ENCODE measurements at regions of chr17 and their contacts with region 1.

Region 1: DNA sequence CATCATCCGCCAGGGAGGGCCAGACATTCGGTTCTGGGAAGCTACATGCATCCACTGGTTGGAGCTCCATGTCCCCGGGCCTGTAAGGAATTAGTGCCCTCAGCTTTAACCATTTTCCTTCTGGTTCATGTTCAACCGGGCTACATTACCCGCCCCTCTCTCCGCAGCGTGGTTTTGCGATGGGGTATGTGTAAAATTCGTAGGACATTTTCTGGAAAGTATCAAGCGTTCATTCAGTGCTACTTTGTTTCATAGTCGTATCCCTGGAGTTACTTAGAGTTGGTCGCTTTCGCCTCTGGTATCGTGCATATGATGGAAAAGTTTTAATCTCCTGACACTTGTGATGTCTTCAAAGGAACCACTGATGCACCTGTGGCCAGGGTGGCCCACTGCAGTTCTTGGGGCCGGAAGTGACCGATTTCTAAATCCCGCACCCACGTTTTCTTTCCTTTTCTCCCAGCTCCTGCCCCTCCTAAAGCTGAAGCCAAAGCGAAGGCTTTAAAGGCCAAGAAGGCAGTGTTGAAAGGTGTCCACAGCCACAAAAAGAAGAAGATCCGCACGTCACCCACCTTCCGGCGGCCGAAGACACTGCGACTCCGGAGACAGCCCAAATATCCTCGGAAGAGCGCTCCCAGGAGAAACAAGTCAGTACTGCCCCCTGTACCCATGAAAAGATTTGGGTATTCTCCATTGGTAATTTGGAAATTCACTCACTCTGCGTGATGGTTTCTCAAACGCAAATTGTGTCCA is 637 bp downstream of the RPL23A start:
- DNase-seq: peak in 1 of 10 donors; percentile 39
- ATAC-seq: peak in 1 of 2 donors; percentile 0
- H3K4me3 Mint-ChIP-seq: peak overlapping the region; percentile 93 to 99 (median 98)
- H3K27ac Mint-ChIP-seq: peak overlapping the region; percentile 96 to 100 (median 98)
- H3K4me1 Mint-ChIP-seq: peaks cover 20 to 75% (median 56%) of the 10 kb centered on the region in 4 donors
- H3K27me3 Mint-ChIP-seq: peaks cover 0 to 20% (median 7%) of the 10 kb centered on the region in 5 donors

Region 2: GRCh38 chr17:28661635-28662537 is 58.5 kb before region 1 on chr17 and contains the starts of genes SDF2 and SUPT6H:
- POLR2A ChIA-PET with region 1: interaction called, 27 read pairs
- DNase-seq: peak; percentile 86 to 98 (median 94)
- ATAC-seq: peak; percentile 88 to 89
- H3K4me3 Mint-ChIP-seq: peak within 1 kb of the TSS; percentile 94 to 100 (median 100)
- H3K27ac Mint-ChIP-seq: peak within 1 kb of the TSS; percentile 99 to 100 (median 100)
- H3K4me1 Mint-ChIP-seq: peaks cover 30 to 70% (median 65%) of the 10 kb centered on the region in 4 donors
- H3K27me3 Mint-ChIP-seq: no peaks in the 10 kb centered on the region
- polyA plus RNA-seq, gene SDF2: 55.8 to 76.3 (median 59.0) TPM
- polyA plus RNA-seq, gene SUPT6H: 7.4 to 22.0 (median 10.0) TPM

Region 3: GRCh38 chr17:28701987-28702751 is 18.3 kb before region 1 on chr17:
- POLR2A ChIA-PET with region 1: no interaction called
- DNase-seq: no peak
- ATAC-seq: no peak
- H3K4me3 Mint-ChIP-seq: no peak overlapping the region
- H3K27ac Mint-ChIP-seq: peak overlapping the region in 5 of 10 donors; percentile 37 to 80 (median 45)
- H3K4me1 Mint-ChIP-seq: peaks cover 0 to 3% (median under 1%) of the 10 kb centered on the region in 4 donors
- H3K27me3 Mint-ChIP-seq: no peaks in the 10 kb centered on the region

Region 4: GRCh38 chr17:28743225-28744103 is 23.0 kb after region 1 on chr17 and contains the start of gene TRAF4:
- POLR2A ChIA-PET with region 1: interaction called, 365 read pairs
- DNase-seq: peak; percentile 50 to 85 (median 74)
- ATAC-seq: peak; percentile 89
- H3K4me3 Mint-ChIP-seq: peak within 1 kb of the TSS; percentile 80 to 93 (median 88)
- H3K27ac Mint-ChIP-seq: peak within 1 kb of the TSS; percentile 66 to 94 (median 90)
- H3K4me1 Mint-ChIP-seq: peaks cover 9 to 62% (median 29%) of the 10 kb centered on the region in 4 donors
- H3K27me3 Mint-ChIP-seq: no peaks in the 10 kb centered on the region
- polyA plus RNA-seq, gene TRAF4: 0.99 to 1.3 (median 1.0) TPM

Region 5: GRCh38 chr17:28750178-28751047 is 30.0 kb after region 1 on chr17:
- POLR2A ChIA-PET with region 1: interaction called, 365 read pairs
- DNase-seq: peak; percentile 79 to 94 (median 85)
- ATAC-seq: peak; percentile 84
- H3K4me3 Mint-ChIP-seq: peak overlapping the region in 1 of 10 donors; percentile 14
- H3K27ac Mint-ChIP-seq: peak overlapping the region in 5 of 10 donors; percentile 43 to 75 (median 69)
- H3K4me1 Mint-ChIP-seq: peaks cover 5 to 28% (median 16%) of the 10 kb centered on the region in 4 donors
- H3K27me3 Mint-ChIP-seq: no peaks in the 10 kb centered on the region